Aorta (tissue), 5 donors: ENCODE measurements at regions of chr5 and their contacts with region 1.

Region 1: DNA sequence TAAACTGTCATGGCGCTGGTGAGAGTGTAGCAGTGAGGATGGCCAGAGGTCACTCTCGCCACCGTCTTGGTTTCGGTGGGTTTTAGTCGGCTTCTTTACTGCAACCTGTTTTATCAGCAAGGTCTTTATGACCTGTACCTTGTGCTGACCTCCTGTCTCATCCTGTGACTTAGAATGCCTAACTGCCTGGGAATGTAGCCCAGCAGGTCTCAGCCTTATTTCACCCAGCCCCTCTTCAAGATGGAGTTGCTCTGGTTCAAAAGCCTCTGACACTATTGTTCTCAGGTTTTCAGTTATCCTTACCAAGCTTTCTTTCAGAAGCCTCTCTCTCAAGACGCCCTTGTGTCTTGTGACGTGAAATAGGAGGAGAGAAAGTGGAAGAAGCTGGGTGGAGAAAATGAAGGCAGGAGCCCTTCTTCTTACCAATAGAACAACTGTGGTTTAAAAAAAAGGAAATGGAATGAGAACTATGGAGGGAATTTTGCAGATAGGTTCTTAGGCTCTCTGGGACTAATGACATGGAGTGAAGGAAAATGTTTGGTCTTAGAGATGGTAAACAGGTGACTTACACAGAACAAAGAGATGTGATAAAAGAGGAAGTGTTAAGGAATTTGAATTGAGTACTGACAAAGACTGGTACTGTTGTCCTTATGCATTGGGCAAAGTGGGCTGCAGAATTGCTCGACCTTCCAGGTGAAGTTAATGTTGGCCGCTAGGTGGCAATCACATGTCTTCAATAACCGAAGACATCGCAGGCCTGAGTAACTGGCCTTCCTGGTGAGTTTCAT is 133.3 kb upstream of the RAI14 start:
- DNase-seq: peak; percentile 76 to 79
- ATAC-seq: peak; percentile 84
- H3K4me3 ChIP-seq: no peak overlapping the region
- H3K27ac ChIP-seq: peak overlapping the region in 1 of 2 donors; percentile 86
- H3K4me1 ChIP-seq: peaks cover 5 to 10% of the 10 kb centered on the region in 2 donors
- H3K27me3 ChIP-seq: no peaks in the 10 kb centered on the region

Region 2: DNA sequence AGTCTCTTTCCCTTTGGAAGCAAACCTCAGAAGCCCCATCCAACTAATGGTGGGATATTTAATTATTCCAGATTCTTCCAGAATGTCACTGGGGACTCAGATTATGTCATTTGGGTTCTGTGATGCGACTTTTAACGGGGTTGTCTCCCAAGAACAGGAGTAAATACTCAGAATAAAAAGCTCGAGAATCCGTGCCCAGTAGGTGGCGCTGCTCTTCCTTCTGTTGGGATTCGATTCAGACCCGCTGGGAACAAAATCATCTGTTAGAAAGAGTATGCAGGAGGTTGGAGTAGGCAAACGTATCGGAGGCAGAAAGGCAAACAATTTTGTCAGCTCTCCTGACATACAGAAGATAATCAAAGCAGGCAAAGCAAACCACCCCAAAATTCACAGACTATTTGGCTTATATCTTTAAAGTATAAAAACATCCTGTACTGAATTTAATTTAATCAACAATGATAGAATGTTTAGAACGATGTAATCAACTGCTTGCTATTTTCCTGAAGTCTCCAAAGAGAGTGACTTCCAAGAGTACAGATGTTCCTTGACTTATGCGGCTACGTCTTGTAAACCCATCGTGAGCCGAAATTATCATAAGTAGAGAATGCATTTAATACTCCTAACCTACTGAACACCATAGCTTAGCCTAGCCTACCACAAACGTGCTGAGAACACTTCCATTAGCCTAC is 36.5 kb before region 1 on chr5:
- intact Hi-C with region 1: loop called (anchors 2 to 5 kb)
- DNase-seq: peak; percentile 87 to 95
- ATAC-seq: peak; percentile 91
- H3K4me3 ChIP-seq: no peak overlapping the region
- H3K27ac ChIP-seq: peak overlapping the region; percentile 92
- H3K4me1 ChIP-seq: peaks cover 5% of the 10 kb centered on the region in 2 donors
- H3K27me3 ChIP-seq: no peaks in the 10 kb centered on the region

Region 3: DNA sequence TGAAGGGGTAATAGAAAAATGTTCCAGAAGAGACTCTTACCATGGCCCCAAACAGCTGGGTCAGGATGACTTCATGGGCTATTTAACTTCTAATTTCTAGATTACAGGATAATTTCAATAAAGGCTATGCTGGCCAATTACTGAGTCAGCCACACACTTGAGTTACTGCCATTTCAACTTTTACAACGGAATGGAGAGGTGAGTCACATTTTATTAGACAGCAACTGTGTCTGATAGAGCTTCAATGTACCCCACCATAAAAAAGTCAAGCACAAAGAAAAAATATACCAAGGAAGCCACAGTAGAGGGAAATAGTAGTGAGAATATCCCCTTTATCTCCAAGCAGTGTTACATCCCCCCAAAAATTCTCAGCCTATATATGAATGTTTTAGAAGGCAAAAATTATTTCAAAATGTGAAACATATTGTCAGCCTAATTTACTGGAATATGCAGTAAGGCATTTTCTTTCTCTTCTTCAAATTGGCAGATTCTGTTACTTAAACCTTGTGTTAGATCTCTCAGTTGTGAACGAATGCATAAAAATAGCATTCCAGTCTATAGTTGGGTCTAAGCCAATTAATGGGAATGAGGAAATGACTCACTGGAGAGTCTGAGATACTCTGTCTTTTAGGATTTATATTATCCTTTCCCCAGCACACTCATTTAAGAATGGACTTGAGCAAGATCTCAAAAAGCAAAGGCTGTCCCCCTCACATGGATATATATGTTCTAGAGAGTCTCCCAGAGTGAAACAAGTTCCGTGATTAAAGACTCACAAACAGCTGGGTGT is 86.3 kb after region 1 on chr5:
- intact Hi-C with region 1: loop called in 1 of 2 experiments (anchors 10 kb)
- DNase-seq: no peak
- ATAC-seq: peak; percentile 75
- H3K4me3 ChIP-seq: no peak overlapping the region
- H3K27ac ChIP-seq: peak overlapping the region in 1 of 2 donors; percentile 51
- H3K4me1 ChIP-seq: peaks cover 3 to 9% of the 10 kb centered on the region in 2 donors
- H3K27me3 ChIP-seq: no peaks in the 10 kb centered on the region

Region 4: DNA sequence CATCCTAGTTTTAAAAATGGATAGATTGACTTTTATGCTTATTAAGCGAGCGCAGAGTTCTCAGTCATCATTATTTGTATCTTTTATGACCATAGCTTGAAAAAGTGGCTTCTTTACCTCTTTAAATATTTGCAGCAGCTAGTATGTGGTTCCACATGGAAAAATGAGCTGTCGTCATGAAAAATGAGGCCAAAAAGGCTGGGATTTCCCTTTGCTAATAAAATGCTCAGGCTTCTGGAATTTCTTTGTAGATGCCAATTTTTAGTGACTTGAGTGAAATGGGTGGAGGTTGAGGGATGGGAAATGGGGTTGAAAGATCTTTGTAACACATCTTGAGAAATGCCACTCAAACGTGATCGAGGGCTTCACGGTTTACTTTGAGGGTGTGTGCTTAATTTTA is 168.5 kb after region 1 on chr5:
- intact Hi-C with region 1: loop called in 1 of 2 experiments (anchors 5 kb)
- DNase-seq: no peak
- ATAC-seq: no peak
- H3K4me3 ChIP-seq: no peak overlapping the region
- H3K27ac ChIP-seq: no peak overlapping the region
- H3K4me1 ChIP-seq: peaks cover 13 to 14% of the 10 kb centered on the region in 2 donors
- H3K27me3 ChIP-seq: no peaks in the 10 kb centered on the region

Region 5: DNA sequence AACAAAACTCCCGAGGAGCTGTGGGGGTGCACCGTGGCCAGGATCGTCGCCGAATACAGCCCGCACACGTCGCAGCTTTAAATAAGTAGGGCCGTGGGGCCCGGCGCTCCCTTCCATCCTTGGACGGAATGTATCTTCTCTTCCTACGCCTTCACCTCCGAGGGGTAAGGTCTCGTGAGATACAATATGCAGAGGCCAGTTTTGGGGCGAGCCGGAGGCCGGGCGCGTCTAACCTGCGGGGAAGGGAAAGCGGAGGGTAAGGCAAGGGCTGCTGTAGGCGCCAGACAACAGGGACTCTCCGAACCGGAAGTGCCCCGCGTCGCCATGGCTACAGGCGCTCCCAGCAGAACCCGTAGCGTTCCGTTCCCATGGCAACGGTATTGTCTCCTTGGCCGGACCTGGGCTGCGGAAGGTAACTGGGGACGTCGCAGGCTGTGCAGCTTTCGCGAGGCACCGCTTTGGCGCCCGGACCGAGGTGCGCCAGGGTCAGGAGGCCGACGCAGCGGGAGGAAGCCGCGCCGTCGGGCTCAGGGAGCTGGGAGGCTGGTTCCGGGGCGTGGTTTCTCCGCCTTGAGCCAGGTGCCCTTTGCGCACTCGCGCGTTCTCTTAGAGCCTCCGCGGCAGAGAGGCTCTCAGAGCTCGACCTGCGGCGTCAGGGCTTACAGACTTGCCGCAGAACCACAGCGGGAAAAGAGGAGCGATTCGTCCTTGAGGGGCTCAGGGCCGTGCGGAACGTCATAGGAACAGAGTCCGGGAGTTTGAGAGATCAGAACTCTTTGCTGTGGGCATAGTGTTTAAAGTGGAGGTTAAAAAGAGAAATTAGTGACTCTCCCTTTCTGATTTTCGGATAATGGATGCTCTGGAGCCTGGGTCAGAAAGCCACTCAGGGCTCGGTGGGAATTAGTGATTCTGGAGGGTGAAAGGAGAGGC is 316.3 kb after region 1 on chr5 and contains the start of gene TTC23L:
- intact Hi-C with region 1: loop called (anchors 5 to 10 kb)
- DNase-seq: peak; percentile 93 to 95
- ATAC-seq: peak; percentile 95
- H3K4me3 ChIP-seq: peak within 1 kb of the TSS; percentile 3 to 51
- H3K27ac ChIP-seq: peak within 1 kb of the TSS in 1 of 2 donors; percentile 4
- H3K4me1 ChIP-seq: no peaks in the 10 kb centered on the region
- H3K27me3 ChIP-seq: no peaks in the 10 kb centered on the region
- total RNA-seq, gene TTC23L: 0.62 to 0.72 TPM

Region 6: DNA sequence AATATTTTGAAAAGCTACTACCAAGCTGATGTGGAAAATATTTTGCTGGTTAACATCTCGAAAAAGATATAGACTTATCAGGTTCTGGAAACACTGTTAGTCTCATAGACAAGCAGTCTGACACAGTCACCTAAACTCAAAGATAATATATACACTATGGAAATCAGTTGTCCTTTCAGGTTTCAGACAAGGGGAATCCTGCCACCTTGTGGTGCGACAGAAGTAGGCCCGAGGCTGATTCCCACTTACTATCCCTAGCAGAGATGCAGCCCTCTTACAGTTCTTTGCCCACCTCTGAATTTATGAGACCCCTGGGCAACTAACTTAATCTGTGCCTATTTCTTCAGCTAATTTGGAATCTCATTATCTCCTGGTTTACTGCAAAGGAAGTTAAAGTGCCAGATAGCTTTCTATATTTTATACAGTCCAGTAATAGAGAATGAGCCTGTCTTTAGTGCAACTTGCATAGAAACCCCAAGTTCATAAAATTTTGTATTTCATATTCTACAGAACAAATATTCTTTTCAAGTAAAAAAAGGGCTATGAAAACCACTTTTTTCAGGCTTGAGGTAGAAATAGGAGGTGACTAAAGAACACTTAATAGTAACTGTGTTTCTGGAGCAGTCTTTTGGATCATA is 375.6 kb after region 1 on chr5:
- intact Hi-C with region 1: loop called (anchors 1 to 5 kb)
- DNase-seq: peak; percentile 64 to 80
- ATAC-seq: peak; percentile 86
- H3K4me3 ChIP-seq: no peak overlapping the region
- H3K27ac ChIP-seq: no peak overlapping the region
- H3K4me1 ChIP-seq: no peaks in the 10 kb centered on the region
- H3K27me3 ChIP-seq: no peaks in the 10 kb centered on the region